ENCODE measurements at regions of chr1 and their contacts with region 1.

Region 1: GRCh38 chr1:185541871-185542301 is 192.3 kb upstream of the HMCN1 start:
- DNase-seq: peak; percentile 18
- H3K4me3 ChIP-seq: no peak overlapping the region
- CTCF ChIP-seq: no peak

Region 2: DNA sequence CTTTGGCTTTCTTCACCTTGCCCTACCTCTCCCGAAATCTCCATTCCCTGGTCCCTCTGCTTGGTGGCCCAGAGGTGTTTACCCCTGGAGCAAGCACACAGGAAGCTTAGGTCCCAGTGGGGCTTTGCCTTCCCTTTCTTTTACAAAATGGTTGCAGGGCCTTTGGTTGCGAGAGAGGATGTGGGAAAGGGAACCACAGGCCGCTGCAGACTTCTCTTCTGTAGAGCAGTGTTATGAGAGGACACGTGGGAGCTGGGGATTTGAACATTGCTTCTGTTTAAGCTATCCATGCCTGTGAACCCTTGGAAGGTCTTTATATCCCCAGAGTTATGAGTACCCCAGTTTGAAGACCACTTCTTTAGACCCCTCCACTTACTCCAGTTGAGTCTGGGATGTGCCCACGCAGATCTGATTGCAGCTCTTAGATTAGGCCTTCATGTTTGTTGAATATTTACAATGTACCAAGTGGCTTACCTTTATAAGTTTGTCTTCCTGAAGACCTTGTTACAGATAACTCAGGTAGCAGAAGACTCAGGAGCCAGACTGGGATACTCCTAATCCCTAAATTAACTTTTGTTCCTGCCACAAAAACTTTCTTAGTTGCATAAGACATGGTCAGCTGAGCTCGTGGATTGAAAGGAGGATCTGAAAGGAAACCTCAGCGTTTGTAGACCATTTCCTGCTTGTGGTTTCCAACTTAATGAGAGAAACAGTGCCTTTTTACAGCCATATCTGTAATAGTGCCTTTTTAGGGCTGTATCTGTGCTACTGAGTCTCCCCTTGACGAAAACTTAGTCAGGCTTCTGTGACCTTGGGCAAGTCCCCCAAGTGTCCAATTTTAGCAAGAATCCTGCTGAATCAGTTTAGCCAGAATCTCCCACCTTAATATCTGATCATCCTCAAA is 202.9 kb before region 1 on chr1:
- in situ Hi-C with region 1: no loop called
- DNase-seq: peak; percentile 55
- H3K4me3 ChIP-seq: no peak overlapping the region
- CTCF ChIP-seq: no peak

Region 3: GRCh38 chr1:185646202-185646683 is 104.4 kb after region 1 on chr1:
- in situ Hi-C with region 1: loop called (anchors 5 kb)
- DNase-seq: peak; percentile 99
- H3K4me3 ChIP-seq: no peak overlapping the region
- CTCF ChIP-seq: no peak

Measured in astrocyte of the cerebellum (primary cell).